ENCODE measurements at regions of chr1 and their contacts with region 1.

Region 1: DNA sequence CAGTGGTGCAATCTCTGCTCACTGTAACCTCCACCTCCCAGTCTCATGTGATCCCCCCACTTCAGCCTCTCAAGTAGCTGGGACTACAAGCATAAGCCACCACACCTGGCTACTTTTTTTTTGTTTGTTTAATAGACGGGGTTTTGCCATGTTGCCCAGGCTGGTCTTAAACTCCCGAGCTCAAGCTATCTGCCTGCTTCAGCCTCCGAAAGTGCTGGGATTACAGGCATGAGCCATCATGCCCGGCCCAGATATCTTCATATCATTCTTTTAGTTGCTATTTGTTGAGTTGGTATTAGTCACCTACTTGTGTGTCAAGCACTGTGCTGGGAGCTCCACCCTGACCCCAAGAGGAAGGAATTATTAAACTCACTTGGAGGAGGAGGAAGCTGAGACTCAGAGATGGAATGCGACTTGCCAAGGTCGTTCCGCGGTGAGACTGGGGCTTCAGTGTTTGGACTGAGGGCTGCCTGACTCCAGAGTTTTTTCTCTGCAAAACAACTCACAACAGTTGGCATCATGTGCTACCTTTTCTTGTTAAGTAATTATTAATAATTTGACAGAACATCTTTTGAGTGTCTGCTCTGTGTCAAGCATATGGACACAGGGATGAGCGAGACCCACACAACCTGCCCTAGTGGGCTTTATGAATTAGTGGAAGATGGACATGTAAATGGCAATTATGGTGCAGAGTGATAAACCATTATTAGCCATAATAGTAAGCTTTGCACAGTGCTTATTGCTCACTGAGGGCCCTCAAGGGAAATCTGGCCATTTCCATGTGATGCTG is 132.0 kb downstream of the FOXD2 start:
- DNase-seq: peak; percentile 93
- H3K4me3 ChIP-seq: no peak overlapping the region
- H3K27ac ChIP-seq: peak overlapping the region; percentile 23
- H3K4me1 ChIP-seq: peaks cover 25% of the 10 kb centered on the region
- H3K27me3 ChIP-seq: no peaks in the 10 kb centered on the region
- CTCF ChIP-seq: peak; percentile 28 to 35
- POLR2A ChIP-seq: no peak

Region 2: DNA sequence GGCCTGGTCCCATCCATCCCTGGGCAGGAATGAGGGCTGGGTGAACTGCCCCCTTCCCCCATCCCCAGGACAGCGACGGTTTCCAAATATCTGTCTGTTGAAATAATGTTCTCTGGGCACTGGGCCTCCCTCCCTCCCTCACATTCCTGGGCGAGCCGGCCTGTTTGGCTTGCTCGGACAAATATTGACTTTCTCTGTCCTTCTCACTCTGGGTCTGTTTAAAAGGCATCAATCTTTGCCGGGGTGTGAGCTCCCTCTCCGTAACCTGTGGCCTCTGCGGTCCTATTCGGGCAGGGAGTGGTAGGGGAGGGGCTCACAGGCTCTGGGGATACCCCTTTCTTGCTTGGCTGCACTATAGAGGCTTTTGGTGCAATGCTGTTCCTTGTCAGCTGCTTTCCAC is 91.8 kb before region 1 on chr1:
- CTCF ChIA-PET with region 1: no interaction called
- POLR2A ChIA-PET with region 1: no interaction called
- dilution Hi-C with region 1: no loop called
- intact Hi-C with region 1: no loop called
- DNase-seq: no peak
- H3K4me3 ChIP-seq: no peak overlapping the region
- H3K27ac ChIP-seq: no peak overlapping the region
- H3K4me1 ChIP-seq: no peaks in the 10 kb centered on the region
- H3K27me3 ChIP-seq: peaks cover 0 to 3% of the 10 kb centered on the region in 2 experiments
- CTCF ChIP-seq: no peak
- POLR2A ChIP-seq: no peak

Region 3: GRCh38 chr1:47527658-47528255 is 42.1 kb before region 1 on chr1:
- CTCF ChIA-PET with region 1: interaction called, 10 read pairs
- POLR2A ChIA-PET with region 1: interaction called, 4 read pairs
- dilution Hi-C with region 1: no loop called
- intact Hi-C with region 1: loop called (anchors 2 kb)
- DNase-seq: peak; percentile 28
- H3K4me3 ChIP-seq: no peak overlapping the region
- H3K27ac ChIP-seq: no peak overlapping the region
- H3K4me1 ChIP-seq: no peaks in the 10 kb centered on the region
- H3K27me3 ChIP-seq: peaks cover 11 to 20% of the 10 kb centered on the region in 2 experiments
- CTCF ChIP-seq: peak; percentile 38 to 61
- POLR2A ChIP-seq: no peak

Region 4: GRCh38 chr1:47532921-47533792 is 36.7 kb before region 1 on chr1:
- CTCF ChIA-PET with region 1: interaction called, 10 read pairs
- POLR2A ChIA-PET with region 1: interaction called, 4 read pairs
- dilution Hi-C with region 1: no loop called
- intact Hi-C with region 1: loop called (anchors 2 kb)
- DNase-seq: peak; percentile 66
- H3K4me3 ChIP-seq: peak overlapping the region in 1 of 3 experiments; percentile 33
- H3K27ac ChIP-seq: no peak overlapping the region
- H3K4me1 ChIP-seq: no peaks in the 10 kb centered on the region
- H3K27me3 ChIP-seq: peaks cover 12 to 17% of the 10 kb centered on the region in 2 experiments
- CTCF ChIP-seq: no peak
- POLR2A ChIP-seq: no peak

Region 5: DNA sequence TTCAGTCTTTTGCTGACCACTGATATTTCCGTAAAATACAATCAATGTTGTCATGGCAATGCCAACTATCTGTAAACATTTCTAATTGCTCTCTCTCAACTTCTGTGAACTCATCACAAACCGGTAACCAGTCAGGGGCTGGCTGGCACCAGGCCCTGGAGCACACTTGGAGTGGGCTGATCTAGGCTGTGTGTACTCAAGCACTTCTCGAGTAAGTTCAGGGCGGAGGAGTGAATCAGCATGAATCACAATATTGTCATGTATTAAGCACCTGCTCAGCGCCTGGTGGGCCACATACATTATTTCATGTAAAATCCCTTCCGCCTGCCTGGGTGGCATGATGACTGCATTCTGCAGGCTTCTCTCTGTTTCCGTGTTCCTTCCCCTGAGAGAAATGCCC is 80.3 kb after region 1 on chr1:
- CTCF ChIA-PET with region 1: interaction called, 4 read pairs
- POLR2A ChIA-PET with region 1: no interaction called
- dilution Hi-C with region 1: no loop called
- intact Hi-C with region 1: loop called (anchors 1 kb)
- DNase-seq: peak; percentile 96
- H3K4me3 ChIP-seq: no peak overlapping the region
- H3K27ac ChIP-seq: peak overlapping the region; percentile 74
- H3K4me1 ChIP-seq: peaks cover 11% of the 10 kb centered on the region
- H3K27me3 ChIP-seq: no peaks in the 10 kb centered on the region
- CTCF ChIP-seq: no peak
- POLR2A ChIP-seq: no peak

Region 6: DNA sequence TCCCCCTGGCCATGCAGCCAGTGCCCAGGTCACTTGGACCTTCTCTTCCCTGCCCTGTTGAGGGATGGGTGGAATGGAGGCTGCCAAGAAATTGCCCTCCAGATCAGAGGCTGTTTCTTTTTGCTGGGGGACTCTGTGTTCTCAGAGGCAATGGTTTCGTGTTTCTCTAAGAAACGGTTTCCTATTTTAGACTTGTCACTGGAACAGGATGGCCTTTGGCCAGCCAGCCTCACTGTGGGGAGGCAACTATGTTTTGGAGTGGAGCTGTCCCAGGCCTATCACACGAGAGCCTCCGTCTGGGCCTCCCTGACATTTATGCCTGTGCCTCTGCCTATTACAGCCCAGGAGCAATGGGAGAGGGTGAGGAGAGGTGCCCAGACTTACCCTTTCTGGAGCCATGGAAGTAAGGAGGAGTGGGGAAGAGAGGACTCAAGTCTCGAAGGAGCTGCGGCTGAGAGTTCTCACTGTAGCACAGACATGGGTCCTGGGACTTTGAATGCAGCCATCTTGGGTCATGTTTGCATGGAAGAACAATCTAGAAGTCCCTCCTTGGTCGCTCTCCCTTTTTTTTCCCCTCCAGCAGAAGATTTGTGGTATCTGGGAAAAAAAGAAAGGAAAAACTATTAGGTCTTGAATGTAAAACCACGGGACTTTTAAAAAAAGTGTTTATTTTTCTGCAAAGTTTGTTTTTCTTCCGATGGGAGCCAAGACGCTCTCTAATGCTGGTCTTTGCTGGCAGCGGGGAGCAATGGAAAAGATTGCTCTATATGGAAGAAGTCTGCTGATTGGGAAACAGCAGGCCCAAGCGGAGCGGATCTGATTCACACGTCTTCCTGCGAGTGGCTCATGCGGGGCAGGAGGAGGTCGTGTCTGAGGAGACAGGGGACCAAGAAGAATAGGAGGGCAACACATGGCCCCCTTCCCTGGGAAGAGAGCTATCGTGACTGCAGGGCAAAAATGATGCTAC is 87.1 kb after region 1 on chr1:
- CTCF ChIA-PET with region 1: interaction called, 4 read pairs
- POLR2A ChIA-PET with region 1: no interaction called
- dilution Hi-C with region 1: no loop called
- intact Hi-C with region 1: loop called (anchors 2 kb)
- DNase-seq: peak; percentile 97
- H3K4me3 ChIP-seq: no peak overlapping the region
- H3K27ac ChIP-seq: peak overlapping the region; percentile 68
- H3K4me1 ChIP-seq: peaks cover 13% of the 10 kb centered on the region
- H3K27me3 ChIP-seq: no peaks in the 10 kb centered on the region
- CTCF ChIP-seq: no peak
- POLR2A ChIP-seq: no peak

Region 7: DNA sequence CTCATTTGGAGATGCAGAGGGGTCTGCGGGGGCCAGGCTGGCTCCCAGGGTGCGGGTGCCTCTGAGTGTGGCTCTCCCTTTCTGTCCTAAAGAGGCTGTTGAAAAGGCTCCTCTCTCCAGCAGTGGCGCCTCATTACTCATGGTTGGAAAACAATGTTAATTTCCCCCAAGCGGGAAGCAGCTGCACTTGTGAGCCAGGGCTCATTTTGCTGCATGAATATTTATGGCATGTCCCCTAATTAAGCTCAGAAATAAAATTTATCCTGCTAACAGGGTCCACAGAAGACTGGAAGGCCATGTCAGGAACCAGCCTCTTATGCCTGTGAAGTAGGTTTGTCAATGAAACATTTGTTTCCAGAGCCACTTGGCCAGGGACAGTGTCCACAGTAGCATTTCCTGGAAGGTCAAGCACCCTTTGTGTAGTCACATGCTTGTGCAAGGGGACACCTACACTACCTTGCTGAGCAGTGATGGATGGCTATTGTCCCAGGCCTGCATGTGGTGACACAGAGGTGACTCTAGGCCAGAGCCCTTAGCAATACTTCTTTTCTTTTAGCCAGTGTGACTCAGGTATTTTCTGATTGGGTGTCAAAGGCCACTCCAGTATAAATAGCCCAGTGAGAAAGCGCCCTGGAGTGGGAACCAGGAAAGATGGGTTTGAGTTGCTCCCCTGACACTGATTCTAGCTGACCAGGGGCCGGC is 127.0 kb after region 1 on chr1:
- CTCF ChIA-PET with region 1: no interaction called
- POLR2A ChIA-PET with region 1: no interaction called
- dilution Hi-C with region 1: no loop called
- intact Hi-C with region 1: no loop called
- DNase-seq: peak; percentile 10
- H3K4me3 ChIP-seq: no peak overlapping the region
- H3K27ac ChIP-seq: no peak overlapping the region
- H3K4me1 ChIP-seq: no peaks in the 10 kb centered on the region
- H3K27me3 ChIP-seq: no peaks in the 10 kb centered on the region
- CTCF ChIP-seq: no peak
- POLR2A ChIP-seq: no peak

Region 8: GRCh38 chr1:47906527-47907176 is 336.8 kb after region 1 on chr1:
- CTCF ChIA-PET with region 1: no interaction called
- POLR2A ChIA-PET with region 1: no interaction called
- dilution Hi-C with region 1: no loop called
- intact Hi-C with region 1: no loop called
- DNase-seq: peak; percentile 45
- H3K4me3 ChIP-seq: no peak overlapping the region
- H3K27ac ChIP-seq: peak overlapping the region; percentile 35
- H3K4me1 ChIP-seq: peaks cover 23% of the 10 kb centered on the region
- H3K27me3 ChIP-seq: no peaks in the 10 kb centered on the region
- CTCF ChIP-seq: no peak
- POLR2A ChIP-seq: no peak